ENCODE measurements at regions of chr10 and their contacts with region 1.

Region 1: GRCh38 chr10:131881104-131881880 is 19.5 kb upstream of the PPP2R2D start:
- DNase-seq: no peak
- H3K4me3 ChIP-seq: no peak overlapping the region
- H3K27ac ChIP-seq: no peak overlapping the region
- H3K4me1 ChIP-seq: no peaks in the 10 kb centered on the region
- H3K27me3 ChIP-seq: peaks cover 0 to 5% of the 10 kb centered on the region in 2 donors
- CTCF ChIP-seq: no peak
- POLR2A ChIP-seq: no peak

Region 2: GRCh38 chr10:130809761-130810515 is 1071.4 kb before region 1 on chr10:
- intact Hi-C with region 1: loop called (anchors 5 kb)
- DNase-seq: no peak
- H3K4me3 ChIP-seq: no peak overlapping the region
- H3K27ac ChIP-seq: no peak overlapping the region
- H3K4me1 ChIP-seq: no peaks in the 10 kb centered on the region
- H3K27me3 ChIP-seq: peaks cover 0 to 33% of the 10 kb centered on the region in 2 donors
- CTCF ChIP-seq: no peak
- POLR2A ChIP-seq: no peak

Measured in breast epithelium (tissue), 4 donors.